Activated naive CD4-positive, alpha-beta T cell treated with anti-CD3 and anti-CD28 coated beads, Interleukin-2, amount 10 ng/mL, durations not matched to agents 7 days and 5 days (primary cell): ENCODE measurements at regions of chr2 and their contacts with region 1.

Region 1: GRCh38 chr2:74529357-74530238 is at the starts of genes AUP1 and HTRA2:
- DNase-seq: peak; percentile 94
- H3K4me3 Mint-ChIP-seq: peak within 1 kb of the TSS; percentile 96
- H3K27ac Mint-ChIP-seq: peak within 1 kb of the TSS; percentile 94
- H3K4me1 Mint-ChIP-seq: peaks cover 51% of the 10 kb centered on the region
- H3K27me3 Mint-ChIP-seq: no peaks in the 10 kb centered on the region

Region 2: DNA sequence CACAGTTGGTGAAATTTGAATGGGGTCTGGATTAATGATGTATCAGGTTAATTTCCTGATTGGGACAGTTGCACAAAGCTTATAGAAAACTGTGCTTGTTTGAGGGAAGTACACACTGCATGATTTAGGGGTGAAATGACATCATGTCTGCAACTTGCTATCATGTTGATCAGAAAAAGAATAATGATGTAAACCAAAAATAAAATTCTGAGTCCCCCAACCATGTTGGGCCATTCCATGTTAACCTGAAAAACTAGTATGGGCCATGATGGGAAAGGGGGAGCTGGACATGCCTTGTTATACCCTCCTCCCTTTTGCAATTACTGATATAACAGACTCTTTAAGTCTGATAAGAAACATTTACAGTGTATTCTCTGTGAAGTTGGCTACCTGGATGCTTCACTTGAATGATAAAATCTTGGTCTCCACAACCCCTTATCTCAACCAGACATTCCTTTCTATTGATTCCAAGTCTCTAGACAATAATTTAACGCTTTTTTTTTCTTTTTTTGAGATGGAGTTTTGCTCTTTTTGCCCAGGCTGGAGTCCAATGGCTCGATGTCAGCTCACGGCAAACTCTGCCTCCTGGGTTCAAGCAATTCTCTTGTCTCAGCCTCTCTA is 78.9 kb before region 1 on chr2:
- CTCF ChIA-PET with region 1: no interaction called
- DNase-seq: no peak
- H3K4me3 Mint-ChIP-seq: no peak overlapping the region
- H3K27ac Mint-ChIP-seq: no peak overlapping the region
- H3K4me1 Mint-ChIP-seq: peaks cover 36% of the 10 kb centered on the region
- H3K27me3 Mint-ChIP-seq: peaks cover 13% of the 10 kb centered on the region

Region 3: GRCh38 chr2:74502720-74503505 is 26.7 kb before region 1 on chr2:
- CTCF ChIA-PET with region 1: interaction called, 11 read pairs
- DNase-seq: peak; percentile 57
- H3K4me3 Mint-ChIP-seq: peak overlapping the region; percentile 61
- H3K27ac Mint-ChIP-seq: no peak overlapping the region
- H3K4me1 Mint-ChIP-seq: peaks cover 72% of the 10 kb centered on the region
- H3K27me3 Mint-ChIP-seq: peaks cover 80% of the 10 kb centered on the region